Dendritic cell treated with granulocyte-macrophage colony-stimulating factor and Interleukin-4, amounts not matched to agents 40 ng/mL and 50 ng/mL, for 4 days (primary cell): ENCODE measurements at regions of chr6 and their contacts with region 1.

Region 1: DNA sequence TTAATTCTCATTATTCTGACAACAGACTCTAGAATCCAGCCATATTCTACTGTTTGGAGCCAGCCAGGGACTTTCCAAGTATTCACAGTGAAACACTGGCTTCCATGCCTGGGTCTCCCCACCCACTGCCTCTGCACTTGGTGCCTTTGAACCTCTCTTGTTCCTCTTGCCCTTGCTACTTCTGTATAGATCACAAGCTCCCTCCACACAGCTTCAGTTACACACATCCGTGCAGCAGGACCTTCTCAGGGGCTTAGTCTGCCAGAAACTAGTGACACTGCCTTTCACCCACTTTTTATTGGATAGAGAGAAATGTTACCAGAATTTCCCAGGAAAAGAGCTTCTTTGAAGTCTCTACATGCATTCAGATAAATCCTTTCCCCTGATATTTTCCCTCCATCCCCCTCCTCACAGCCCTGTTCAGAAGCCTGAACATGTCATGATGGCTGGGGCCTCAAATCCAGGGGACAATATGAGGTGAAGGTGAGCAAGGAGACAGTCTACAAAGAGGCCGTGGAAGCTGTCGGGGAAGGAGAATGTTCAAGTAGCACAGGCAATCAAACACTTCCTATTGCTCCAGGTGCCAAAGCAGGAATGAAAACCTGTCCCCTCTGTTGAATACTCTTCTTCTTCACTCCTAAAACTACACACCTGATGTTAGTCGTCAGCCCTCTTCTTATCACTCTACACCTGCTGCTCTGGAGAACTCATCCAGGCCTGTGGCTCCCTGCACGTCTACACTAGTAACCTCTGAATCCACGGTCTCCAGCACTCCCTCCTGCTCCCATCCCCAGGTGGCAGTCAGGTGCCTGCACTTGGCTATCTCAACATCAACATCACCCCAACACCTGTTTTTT is 20.2 kb upstream of the HLA-DOA start:
- H3K4me3 Mint-ChIP-seq: peak overlapping the region; percentile 65
- H3K27ac Mint-ChIP-seq: peak overlapping the region; percentile 98
- H3K4me1 Mint-ChIP-seq: peaks cover 48% of the 10 kb centered on the region
- H3K27me3 Mint-ChIP-seq: no peaks in the 10 kb centered on the region

Region 2: GRCh38 chr6:32853541-32854375 is 175.8 kb before region 1 on chr6 and contains the starts of genes PSMB9 and TAP1:
- intact Hi-C with region 1: no loop called
- H3K4me3 Mint-ChIP-seq: peak within 1 kb of the TSS; percentile 95
- H3K27ac Mint-ChIP-seq: peak within 1 kb of the TSS; percentile 93
- H3K4me1 Mint-ChIP-seq: peaks cover 70% of the 10 kb centered on the region
- H3K27me3 Mint-ChIP-seq: no peaks in the 10 kb centered on the region

Region 3: GRCh38 chr6:32971581-32972352 is 57.8 kb before region 1 on chr6:
- intact Hi-C with region 1: no loop called
- H3K4me3 Mint-ChIP-seq: peak overlapping the region; percentile 97
- H3K27ac Mint-ChIP-seq: peak overlapping the region; percentile 100
- H3K4me1 Mint-ChIP-seq: peaks cover 40% of the 10 kb centered on the region
- H3K27me3 Mint-ChIP-seq: no peaks in the 10 kb centered on the region

Region 4: GRCh38 chr6:33014841-33015634 is 14.5 kb before region 1 on chr6:
- intact Hi-C with region 1: loop called (anchors 1 kb)
- H3K4me3 Mint-ChIP-seq: peak overlapping the region; percentile 73
- H3K27ac Mint-ChIP-seq: peak overlapping the region; percentile 99
- H3K4me1 Mint-ChIP-seq: peaks cover 75% of the 10 kb centered on the region
- H3K27me3 Mint-ChIP-seq: peaks cover 2% of the 10 kb centered on the region

Region 5: DNA sequence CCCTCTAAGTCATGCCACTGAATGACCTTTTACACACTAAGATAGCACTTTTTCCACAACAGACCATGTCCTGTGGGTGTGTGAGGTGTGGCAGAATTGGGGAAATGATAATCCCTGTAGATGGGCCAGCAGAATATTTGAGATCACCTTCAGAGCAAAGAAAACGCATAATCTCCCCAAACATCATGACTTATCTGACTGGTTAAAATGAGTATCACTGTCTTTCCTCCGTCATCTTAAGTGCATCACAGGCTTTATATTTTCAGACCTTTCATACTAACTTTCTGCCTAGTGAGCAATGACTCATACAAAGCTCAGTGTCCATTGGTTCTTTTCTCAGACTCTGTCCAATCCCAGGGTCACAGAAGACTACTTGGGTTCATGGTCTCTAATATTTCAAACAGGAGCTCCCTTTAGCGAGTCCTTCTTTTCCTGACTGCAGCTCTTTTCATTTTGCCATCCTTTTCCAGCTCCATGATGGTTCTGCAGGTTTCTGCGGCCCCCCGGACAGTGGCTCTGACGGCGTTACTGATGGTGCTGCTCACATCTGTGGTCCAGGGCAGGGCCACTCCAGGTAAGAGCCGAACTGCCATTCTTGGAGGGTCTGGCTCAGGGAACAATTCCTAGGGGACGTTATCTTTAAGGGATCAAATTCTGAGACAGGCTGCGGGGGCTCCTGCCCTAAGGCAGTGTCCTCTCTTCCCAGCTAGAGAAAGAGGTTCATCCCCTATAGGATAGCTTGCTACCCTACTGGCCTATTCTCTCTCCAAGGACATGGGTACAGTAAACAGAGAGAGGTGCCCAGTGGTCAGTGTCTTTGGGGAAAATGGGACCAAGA is 46.2 kb after region 1 on chr6 and contains the start of gene HLA-DPB1:
- intact Hi-C with region 1: loop called (anchors 2 kb)
- H3K4me3 Mint-ChIP-seq: peak within 1 kb of the TSS; percentile 92
- H3K27ac Mint-ChIP-seq: peak within 1 kb of the TSS; percentile 89
- H3K4me1 Mint-ChIP-seq: peaks cover 40% of the 10 kb centered on the region
- H3K27me3 Mint-ChIP-seq: no peaks in the 10 kb centered on the region